ENCODE measurements at regions of chr1 and their contacts with region 1.

Region 1: GRCh38 chr1:161165742-161166668 is at the start of gene PPOX:
- H3K4me3 ChIP-seq: peak within 1 kb of the TSS; percentile 58
- H3K27ac ChIP-seq: peak within 1 kb of the TSS; percentile 39; the same call in 1 of the 2 replicates
- H3K4me1 ChIP-seq: peaks cover 3% of the 10 kb centered on the region; the same call in 1 of the 2 replicates
- CTCF ChIP-seq: peak; percentile 70

Region 2: DNA sequence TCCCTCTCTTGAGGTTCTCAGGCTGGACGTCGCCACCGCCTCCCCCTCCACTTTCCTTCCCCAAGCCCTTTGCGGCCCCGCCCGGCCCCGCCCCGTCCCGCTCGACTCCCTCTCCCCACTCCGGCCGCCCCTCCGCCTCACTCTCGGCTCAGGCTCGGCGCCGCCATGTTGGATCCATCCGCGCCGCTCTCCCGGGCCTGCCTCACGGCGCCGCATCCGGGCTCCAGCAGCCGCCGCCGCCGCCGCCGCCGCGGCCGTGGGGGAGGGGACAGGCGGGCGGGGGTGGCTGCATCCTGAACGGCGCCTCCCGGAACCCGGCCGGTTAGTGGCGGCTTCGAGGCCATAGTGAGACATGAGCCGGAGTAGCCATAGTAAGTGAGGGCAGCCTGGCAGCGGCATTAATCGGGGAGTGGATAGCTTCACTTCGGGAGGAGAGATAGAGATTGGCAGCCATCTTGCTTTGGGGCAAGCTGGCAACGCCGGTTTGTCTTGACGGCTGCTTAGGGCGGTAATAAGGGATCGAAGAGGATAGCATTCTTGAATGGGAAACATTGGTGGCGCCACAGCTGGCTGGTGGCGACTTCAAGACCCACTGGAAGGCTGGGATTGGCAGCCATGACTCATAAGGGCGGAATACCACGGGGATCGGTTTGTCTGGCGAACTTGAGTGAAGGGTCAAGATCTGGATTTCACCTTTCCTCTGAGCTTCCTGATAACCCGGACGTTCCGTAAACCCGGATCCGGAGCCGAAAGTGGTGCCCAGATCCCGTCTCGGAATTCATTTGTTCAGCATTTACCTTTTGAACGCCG is 33.4 kb before region 1 on chr1 and contains the start of gene DEDD:
- CTCF ChIA-PET with region 1: interaction called, 12 read pairs
- POLR2A ChIA-PET with region 1: interaction called, 24 read pairs
- H3K4me3 ChIP-seq: peak within 1 kb of the TSS; percentile 84
- H3K27ac ChIP-seq: peak within 1 kb of the TSS; percentile 91
- H3K4me1 ChIP-seq: 0 out of 2 replicates have a peak, but pooled peaks cover 2% of the 10 kb centered on the region
- CTCF ChIP-seq: peak; percentile 71; the same call in 1 of the 2 replicates

Region 3: DNA sequence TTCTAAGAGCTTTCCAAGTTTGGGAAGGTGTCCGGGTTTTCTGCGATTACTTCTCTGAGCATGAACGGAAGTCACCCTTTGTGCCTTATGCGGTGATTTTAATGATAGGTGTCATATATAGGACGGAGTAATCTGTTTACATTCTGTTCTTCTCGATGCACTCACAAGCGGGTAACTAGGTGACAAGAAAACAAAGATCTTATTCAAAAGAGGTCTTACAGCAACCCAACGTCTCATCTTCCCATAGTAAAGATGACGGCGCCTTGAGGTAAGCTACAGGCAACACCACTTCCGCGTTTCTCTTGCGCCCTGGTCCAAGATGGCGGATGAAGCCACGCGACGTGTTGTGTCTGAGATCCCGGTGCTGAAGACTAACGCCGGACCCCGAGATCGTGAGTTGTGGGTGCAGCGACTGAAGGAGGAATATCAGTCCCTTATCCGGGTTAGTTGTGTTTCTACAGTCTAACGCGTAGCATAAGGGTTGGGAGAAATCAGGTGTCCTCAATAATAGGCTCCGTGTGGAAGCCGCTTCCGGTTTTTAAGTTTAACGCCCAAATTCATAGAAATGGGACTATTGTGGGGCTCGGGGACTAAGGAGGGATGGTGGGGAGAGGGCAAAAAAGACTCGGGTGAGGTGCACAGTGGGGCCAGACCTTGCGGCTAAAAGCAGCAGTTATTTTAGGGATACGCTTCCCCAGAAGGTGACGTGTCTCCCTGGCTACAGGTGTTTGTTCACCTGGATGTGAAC is 12.2 kb before region 1 on chr1 and contains the start of gene UFC1:
- CTCF ChIA-PET with region 1: interaction called, 17 read pairs
- POLR2A ChIA-PET with region 1: interaction called, 53 read pairs
- H3K4me3 ChIP-seq: peak within 1 kb of the TSS; percentile 89
- H3K27ac ChIP-seq: peak within 1 kb of the TSS; percentile 70
- H3K4me1 ChIP-seq: no peaks in the 10 kb centered on the region
- CTCF ChIP-seq: no peak

Region 4: DNA sequence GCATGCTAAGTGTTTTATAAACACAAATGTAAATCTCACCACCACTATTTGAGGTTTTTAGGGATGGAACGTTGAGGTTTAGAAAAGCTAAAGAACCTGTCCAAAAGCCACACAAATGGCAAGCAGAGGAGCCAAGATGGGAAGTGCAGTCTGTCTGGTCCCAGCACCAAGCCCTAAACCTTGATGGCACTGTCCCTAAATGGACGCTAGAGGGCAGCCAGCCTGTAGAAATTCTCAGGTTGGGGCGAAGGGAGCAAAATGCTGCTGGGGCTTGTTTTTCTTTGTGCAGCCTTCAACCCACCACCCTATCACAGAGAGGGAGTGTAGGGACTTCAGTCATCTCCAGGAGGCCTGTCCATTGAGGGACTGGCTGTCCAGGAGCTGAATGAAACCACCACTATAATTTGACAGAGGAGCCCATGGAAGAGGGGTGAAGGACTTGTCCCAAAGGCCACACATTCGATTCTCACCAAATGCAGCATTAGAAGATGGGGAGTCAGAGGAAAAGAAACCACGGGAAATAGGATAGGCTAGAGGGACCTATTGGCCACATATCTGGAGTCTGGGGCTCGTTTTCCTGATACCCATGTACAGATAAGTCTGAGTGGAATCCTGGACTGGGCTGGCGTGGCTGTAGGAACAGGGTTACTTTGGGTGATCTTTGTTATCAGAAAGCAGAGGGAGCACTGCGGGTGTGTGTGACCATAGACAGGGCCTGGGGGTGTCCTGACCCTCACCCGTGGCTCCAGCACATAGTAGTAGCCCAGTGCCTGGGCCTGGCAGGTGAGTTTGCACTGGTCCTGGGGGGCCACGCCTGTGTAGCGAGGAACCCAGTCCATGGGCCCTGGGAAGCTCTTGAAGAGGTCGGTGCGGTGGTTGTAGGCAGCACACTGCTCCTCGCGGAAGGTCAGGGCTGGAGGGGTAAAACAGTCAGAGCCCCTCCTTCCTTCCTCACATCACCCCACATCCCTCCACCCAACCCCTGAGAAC is 26.8 kb after region 1 on chr1:
- CTCF ChIA-PET with region 1: interaction called, 15 read pairs
- POLR2A ChIA-PET with region 1: interaction called, 4 read pairs
- H3K4me3 ChIP-seq: no peak overlapping the region
- H3K27ac ChIP-seq: no peak overlapping the region
- H3K4me1 ChIP-seq: no peaks in the 10 kb centered on the region
- CTCF ChIP-seq: peak; percentile 71

Region 5: GRCh38 chr1:161220002-161220401 is 54.0 kb after region 1 on chr1:
- CTCF ChIA-PET with region 1: no interaction called
- POLR2A ChIA-PET with region 1: no interaction called
- H3K4me3 ChIP-seq: no peak overlapping the region
- H3K27ac ChIP-seq: no peak overlapping the region
- H3K4me1 ChIP-seq: no peaks in the 10 kb centered on the region
- CTCF ChIP-seq: no peak

Region 6: DNA sequence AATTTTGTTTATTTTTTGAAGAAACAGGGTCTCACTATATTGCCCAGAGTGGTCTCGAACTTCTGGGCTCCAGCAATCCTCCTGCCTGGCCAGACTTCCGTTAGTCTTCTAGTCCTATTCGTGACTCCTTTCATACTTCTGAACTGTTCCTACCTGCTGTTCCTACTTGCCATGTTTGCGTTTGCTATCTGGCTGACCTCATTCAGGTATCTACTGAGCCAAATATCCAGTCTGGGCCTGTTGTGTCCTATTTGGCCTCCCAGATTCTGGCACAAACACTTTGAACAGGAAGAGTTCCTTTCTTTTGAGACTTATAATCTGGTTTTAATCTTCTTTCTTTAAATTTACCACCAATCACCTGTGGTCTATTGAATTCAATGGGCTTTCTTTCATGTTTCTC is 78.9 kb after region 1 on chr1:
- CTCF ChIA-PET with region 1: no interaction called
- POLR2A ChIA-PET with region 1: no interaction called
- H3K4me3 ChIP-seq: no peak overlapping the region
- H3K27ac ChIP-seq: no peak overlapping the region
- H3K4me1 ChIP-seq: no peaks in the 10 kb centered on the region
- CTCF ChIP-seq: no peak

Region 7: GRCh38 chr1:161382214-161383019 is 216.4 kb after region 1 on chr1:
- CTCF ChIA-PET with region 1: interaction called, 12 read pairs
- POLR2A ChIA-PET with region 1: interaction called, 6 read pairs
- H3K4me3 ChIP-seq: no peak overlapping the region
- H3K27ac ChIP-seq: no peak overlapping the region
- H3K4me1 ChIP-seq: no peaks in the 10 kb centered on the region
- CTCF ChIP-seq: 0 out of 2 replicates have a peak, but pooled peaks have one; percentile 13

Measured in HEK293 (cell line).